Activated T-helper 1 cell treated with anti-CD3 and anti-CD28 coated beads, Interleukin-12 subunit alpha, Interleukin-12 subunit beta, Interleukin-2, Interleukin-4 antibody, amounts not matched to agents 30 ng/mL and 10 ng/mL and 1 ng/mL, durations not matched to agents 14 hours and 24 hours and 36 hours (primary cell): ENCODE measurements at regions of chr3 and their contacts with region 1.

Region 1: GRCh38 chr3:71064288-71064955 is 519.1 kb downstream of the FOXP1 start:
- DNase-seq: peak; percentile 59
- H3K4me3 Mint-ChIP-seq: no peak overlapping the region
- H3K27ac Mint-ChIP-seq: no peak overlapping the region
- H3K4me1 Mint-ChIP-seq: peaks cover 39% of the 10 kb centered on the region
- H3K27me3 Mint-ChIP-seq: no peaks in the 10 kb centered on the region

Region 2: GRCh38 chr3:70726961-70727360 is 337.5 kb before region 1 on chr3:
- intact Hi-C with region 1: no loop called
- DNase-seq: no peak
- H3K4me3 Mint-ChIP-seq: no peak overlapping the region
- H3K27ac Mint-ChIP-seq: no peak overlapping the region
- H3K4me1 Mint-ChIP-seq: no peaks in the 10 kb centered on the region
- H3K27me3 Mint-ChIP-seq: no peaks in the 10 kb centered on the region

Region 3: GRCh38 chr3:70856414-70857162 is 207.8 kb before region 1 on chr3:
- intact Hi-C with region 1: no loop called
- DNase-seq: no peak
- H3K4me3 Mint-ChIP-seq: no peak overlapping the region
- H3K27ac Mint-ChIP-seq: peak overlapping the region; percentile 49
- H3K4me1 Mint-ChIP-seq: peaks cover 22% of the 10 kb centered on the region
- H3K27me3 Mint-ChIP-seq: peaks cover 6% of the 10 kb centered on the region

Region 4: DNA sequence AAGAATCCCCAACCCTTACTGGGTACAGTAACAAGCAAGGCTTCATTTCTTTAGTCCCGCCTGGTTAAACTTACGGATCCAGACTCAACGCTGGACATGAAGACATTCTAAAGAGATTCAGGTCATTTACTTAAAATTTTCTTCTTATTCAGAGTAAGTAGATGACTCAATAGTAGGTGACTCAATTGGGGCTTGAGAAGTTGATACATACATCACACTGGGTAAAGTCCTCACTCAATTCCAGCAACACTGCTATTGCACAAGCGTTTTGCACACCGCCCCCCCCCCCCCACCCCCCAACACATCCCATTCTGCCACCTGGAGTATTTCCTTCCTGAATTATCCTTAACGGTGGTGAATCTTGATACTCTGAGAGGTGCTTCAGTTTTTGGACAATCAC is 90.9 kb before region 1 on chr3:
- intact Hi-C with region 1: no loop called
- DNase-seq: no peak
- H3K4me3 Mint-ChIP-seq: no peak overlapping the region
- H3K27ac Mint-ChIP-seq: no peak overlapping the region
- H3K4me1 Mint-ChIP-seq: peaks cover 10% of the 10 kb centered on the region
- H3K27me3 Mint-ChIP-seq: no peaks in the 10 kb centered on the region

Region 5: DNA sequence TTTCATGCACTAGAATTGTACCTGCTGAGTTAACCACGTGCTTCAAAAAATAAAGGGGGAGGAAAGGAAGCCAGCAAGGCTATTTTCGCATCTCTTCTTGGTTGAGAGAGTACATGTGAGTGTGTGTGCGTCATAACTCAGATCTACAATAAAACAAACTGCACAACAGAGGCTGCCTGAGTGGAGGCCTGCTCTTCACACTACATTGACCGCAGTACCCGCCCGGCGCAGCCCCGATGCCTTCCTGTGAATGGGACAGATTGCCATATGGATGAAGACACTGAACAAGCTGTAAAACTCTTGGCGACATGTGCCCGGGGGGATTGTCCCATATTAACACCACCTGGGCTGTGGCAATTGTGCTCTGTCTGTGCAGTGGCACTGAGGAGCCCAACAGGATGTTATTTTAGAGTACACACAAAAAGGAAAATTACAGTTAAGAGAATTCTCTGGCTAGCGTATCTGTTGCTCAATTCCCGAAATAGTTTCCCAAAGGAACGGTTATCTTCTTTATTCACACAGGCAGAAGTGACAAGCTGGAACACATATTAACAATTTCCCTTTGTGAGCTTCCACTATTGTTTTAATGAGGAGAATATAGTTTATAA is 32.4 kb before region 1 on chr3:
- intact Hi-C with region 1: no loop called
- DNase-seq: no peak
- H3K4me3 Mint-ChIP-seq: no peak overlapping the region
- H3K27ac Mint-ChIP-seq: no peak overlapping the region
- H3K4me1 Mint-ChIP-seq: peaks cover 33% of the 10 kb centered on the region
- H3K27me3 Mint-ChIP-seq: peaks cover 1% of the 10 kb centered on the region

Region 6: DNA sequence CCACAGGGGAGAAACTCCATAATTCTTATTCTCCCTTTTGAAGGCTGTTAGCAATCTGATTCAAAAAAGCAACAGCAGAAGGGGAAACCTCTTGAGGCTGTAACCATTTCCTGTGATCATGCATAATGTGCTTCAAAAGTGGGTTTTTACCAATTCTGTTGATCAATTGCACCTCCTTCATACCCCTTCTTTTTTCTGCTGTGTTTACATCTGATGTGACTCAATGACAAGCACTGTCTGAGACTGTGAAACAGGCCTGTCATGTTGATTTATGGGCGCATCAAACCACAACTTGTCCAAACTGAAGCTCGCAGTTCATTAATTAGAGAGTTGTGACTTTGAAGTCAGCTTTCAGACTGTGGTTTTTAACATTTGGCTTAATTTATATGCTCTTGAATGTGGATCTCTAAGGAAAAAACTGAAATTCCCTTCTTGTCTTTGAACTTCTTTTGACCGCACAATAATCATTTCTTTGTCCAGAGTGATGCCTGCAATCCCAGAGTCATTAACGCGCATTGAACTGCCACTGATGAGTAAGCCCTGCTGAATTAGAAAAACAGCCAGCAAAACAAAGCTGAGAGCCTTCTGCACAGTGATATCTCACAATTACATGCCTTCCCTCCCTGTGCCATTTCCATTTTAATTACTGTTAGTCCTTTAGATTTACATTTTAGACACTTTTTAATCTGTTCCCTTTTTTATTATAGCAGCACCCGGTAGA is 13.7 kb before region 1 on chr3:
- intact Hi-C with region 1: loop called (anchors 1 kb)
- DNase-seq: no peak
- H3K4me3 Mint-ChIP-seq: no peak overlapping the region
- H3K27ac Mint-ChIP-seq: peak overlapping the region; percentile 60
- H3K4me1 Mint-ChIP-seq: peaks cover 70% of the 10 kb centered on the region
- H3K27me3 Mint-ChIP-seq: peaks cover 5% of the 10 kb centered on the region

Region 7: GRCh38 chr3:71389911-71390573 is 325.6 kb after region 1 on chr3:
- intact Hi-C with region 1: loop called (anchors 2 kb)
- DNase-seq: no peak
- H3K4me3 Mint-ChIP-seq: peak overlapping the region; percentile 10
- H3K27ac Mint-ChIP-seq: peak overlapping the region; percentile 27
- H3K4me1 Mint-ChIP-seq: peaks cover 33% of the 10 kb centered on the region
- H3K27me3 Mint-ChIP-seq: peaks cover 18% of the 10 kb centered on the region

Region 8: DNA sequence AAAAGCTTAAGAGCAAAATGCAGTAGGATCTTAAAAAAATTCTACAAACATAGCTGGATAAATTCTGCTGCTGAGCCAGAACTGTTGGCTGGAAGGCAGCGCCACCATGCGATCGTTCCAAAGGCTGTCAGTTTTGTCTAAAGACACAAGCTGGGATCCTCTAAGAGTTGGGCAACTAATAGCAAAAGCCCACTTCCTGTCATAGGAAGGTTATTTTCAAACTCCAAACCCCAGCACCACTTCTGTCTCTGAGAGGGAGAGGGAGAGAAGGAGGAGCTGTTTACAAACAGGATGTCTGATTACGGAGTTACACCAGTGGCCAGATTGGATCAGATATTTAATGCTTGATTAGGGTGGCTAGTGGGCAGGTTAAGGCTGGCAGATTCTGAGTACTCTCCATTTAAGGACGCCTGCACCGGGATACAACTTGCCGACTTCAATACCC is 616.8 kb after region 1 on chr3:
- intact Hi-C with region 1: loop called (anchors 10 kb)
- DNase-seq: no peak
- H3K4me3 Mint-ChIP-seq: no peak overlapping the region
- H3K27ac Mint-ChIP-seq: no peak overlapping the region
- H3K4me1 Mint-ChIP-seq: peaks cover 12% of the 10 kb centered on the region
- H3K27me3 Mint-ChIP-seq: no peaks in the 10 kb centered on the region

Region 9: GRCh38 chr3:72977060-72977808 is 1912.8 kb after region 1 on chr3:
- intact Hi-C with region 1: loop called (anchors 5 kb)
- DNase-seq: no peak
- H3K4me3 Mint-ChIP-seq: no peak overlapping the region
- H3K27ac Mint-ChIP-seq: peak overlapping the region; percentile 85
- H3K4me1 Mint-ChIP-seq: peaks cover 24% of the 10 kb centered on the region
- H3K27me3 Mint-ChIP-seq: peaks cover 4% of the 10 kb centered on the region